MCF 10A (cell line): ENCODE measurements at regions of chr1 and their contacts with region 1.

Region 1: DNA sequence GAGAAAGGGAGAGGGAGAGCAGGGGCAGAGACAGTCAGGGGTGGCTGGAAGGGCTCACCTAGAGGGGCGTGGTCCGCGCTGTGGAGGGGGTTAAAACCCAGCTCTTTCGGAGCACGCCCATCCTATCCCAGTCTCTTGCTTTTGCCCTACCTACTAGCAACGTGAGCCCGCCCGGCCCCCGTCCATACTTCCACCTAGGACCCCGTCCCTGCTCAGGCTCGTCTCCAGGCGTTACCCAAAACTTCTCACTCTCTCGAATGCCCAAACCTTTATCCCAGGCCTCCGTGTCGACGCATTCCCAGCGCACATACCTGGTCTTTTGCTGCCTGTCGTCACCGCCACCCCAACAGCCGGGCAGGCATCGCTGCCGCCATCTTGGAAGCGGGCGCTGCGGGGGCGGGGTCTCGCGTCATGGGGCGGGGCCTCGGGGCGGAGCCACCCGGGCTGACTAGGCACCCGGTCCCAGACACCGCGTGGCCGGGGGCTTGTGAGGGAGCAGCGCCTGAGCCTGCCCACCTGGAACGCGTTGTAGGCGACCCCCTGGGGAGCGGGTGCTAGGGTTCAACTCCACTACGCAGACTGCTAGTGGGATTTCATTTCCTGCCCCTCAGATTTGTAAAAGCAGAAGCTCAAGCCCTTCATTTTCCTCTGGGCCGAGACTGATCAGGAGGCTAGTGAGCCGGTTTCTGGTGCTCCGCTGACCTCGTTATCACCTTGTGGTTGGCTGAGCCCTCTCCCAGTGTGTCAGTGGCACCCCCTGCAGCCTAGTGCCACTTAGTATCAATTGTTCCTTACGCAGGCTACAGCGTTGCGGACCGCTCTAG is at the start of gene B4GALT3:
- DNase-seq: peak; percentile 87
- H3K4me3 Mint-ChIP-seq: peak within 1 kb of the TSS; percentile 86
- H3K27ac Mint-ChIP-seq: peak within 1 kb of the TSS; percentile 92
- H3K4me1 Mint-ChIP-seq: peaks cover 37% of the 10 kb centered on the region
- H3K27me3 Mint-ChIP-seq: no peaks in the 10 kb centered on the region
- CTCF ChIP-seq: no peak
- total RNA-seq, gene B4GALT3: 50.0 and 51.7 TPM in 2 replicates

Region 2: DNA sequence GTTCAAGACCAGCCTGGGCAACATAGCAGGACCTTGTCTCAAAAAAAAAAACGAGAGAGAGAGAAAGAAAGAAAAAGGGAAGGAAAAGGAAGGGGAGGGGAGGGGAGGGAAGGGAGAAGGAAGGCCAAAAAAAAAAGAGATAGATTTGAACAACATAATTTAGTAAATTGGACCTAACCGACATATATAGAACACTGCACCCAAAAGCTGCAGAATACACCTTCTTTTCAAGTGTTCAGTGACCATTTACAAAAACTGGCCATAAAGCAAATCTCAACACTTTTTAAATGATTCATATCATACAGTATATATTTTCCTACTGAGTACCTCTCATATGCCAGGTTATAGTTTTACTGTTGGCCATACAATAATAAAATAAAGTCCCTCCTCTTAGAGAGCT is 145.4 kb before region 1 on chr1:
- CTCF ChIA-PET with region 1: no interaction called
- POLR2A ChIA-PET with region 1: no interaction called
- intact Hi-C with region 1: no loop called
- DNase-seq: no peak
- H3K4me3 Mint-ChIP-seq: no peak overlapping the region
- H3K27ac Mint-ChIP-seq: no peak overlapping the region
- H3K4me1 Mint-ChIP-seq: peaks cover 15% of the 10 kb centered on the region
- H3K27me3 Mint-ChIP-seq: no peaks in the 10 kb centered on the region
- CTCF ChIP-seq: no peak

Region 3: DNA sequence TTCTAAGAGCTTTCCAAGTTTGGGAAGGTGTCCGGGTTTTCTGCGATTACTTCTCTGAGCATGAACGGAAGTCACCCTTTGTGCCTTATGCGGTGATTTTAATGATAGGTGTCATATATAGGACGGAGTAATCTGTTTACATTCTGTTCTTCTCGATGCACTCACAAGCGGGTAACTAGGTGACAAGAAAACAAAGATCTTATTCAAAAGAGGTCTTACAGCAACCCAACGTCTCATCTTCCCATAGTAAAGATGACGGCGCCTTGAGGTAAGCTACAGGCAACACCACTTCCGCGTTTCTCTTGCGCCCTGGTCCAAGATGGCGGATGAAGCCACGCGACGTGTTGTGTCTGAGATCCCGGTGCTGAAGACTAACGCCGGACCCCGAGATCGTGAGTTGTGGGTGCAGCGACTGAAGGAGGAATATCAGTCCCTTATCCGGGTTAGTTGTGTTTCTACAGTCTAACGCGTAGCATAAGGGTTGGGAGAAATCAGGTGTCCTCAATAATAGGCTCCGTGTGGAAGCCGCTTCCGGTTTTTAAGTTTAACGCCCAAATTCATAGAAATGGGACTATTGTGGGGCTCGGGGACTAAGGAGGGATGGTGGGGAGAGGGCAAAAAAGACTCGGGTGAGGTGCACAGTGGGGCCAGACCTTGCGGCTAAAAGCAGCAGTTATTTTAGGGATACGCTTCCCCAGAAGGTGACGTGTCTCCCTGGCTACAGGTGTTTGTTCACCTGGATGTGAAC is 23.5 kb before region 1 on chr1 and contains the start of gene UFC1:
- CTCF ChIA-PET with region 1: interaction called, 5 read pairs
- POLR2A ChIA-PET with region 1: interaction called, 20 read pairs
- intact Hi-C with region 1: no loop called
- DNase-seq: peak; percentile 94
- H3K4me3 Mint-ChIP-seq: peak within 1 kb of the TSS; percentile 92
- H3K27ac Mint-ChIP-seq: peak within 1 kb of the TSS; percentile 100
- H3K4me1 Mint-ChIP-seq: peaks cover 18% of the 10 kb centered on the region
- H3K27me3 Mint-ChIP-seq: no peaks in the 10 kb centered on the region
- CTCF ChIP-seq: no peak
- total RNA-seq, gene UFC1: 123 and 125 TPM in 2 replicates

Region 4: DNA sequence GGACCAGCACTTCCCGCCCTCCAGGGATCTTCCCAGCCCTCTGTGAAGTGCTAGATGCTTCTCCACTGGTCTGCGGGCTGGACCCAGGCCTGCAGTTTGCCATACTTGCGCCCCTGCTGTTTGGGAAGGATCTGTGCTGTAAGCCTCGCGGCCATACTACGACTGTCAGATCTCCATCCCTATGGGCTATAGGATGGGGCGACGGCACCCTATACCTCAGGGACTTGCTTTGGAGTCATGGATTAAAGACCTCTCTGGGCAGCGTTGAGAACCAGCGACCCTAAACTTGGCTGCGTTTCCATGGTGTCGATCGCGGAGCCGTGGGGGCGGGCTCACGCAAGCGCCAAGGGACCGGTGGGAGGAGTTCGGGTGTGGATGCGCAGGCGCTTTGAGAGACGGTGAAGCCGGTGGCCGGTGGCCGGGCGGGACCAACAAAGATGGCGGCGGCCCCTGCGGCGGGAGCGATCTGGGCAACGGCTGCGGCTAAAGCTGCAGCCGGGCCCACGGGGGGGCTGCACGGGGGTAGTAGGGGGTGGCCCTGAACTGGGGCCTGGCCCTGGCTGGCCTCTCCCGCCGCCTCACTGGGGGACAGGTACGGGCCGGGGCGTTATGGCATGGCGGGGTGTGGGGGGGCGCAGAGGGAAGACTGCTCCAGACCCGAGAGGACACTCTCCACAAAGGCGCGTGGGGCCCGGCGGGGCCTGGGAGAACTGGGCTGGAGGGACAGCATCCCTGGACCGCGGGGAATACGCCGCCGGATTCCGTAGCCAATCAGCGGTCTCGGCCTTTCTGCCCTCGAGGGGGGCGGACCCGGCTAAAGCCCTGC is 18.0 kb before region 1 on chr1 and contains the start of gene USP21:
- CTCF ChIA-PET with region 1: interaction called, 56 read pairs
- POLR2A ChIA-PET with region 1: interaction called, 101 read pairs
- intact Hi-C with region 1: no loop called
- DNase-seq: peak; percentile 94
- H3K4me3 Mint-ChIP-seq: peak within 1 kb of the TSS; percentile 87
- H3K27ac Mint-ChIP-seq: peak within 1 kb of the TSS; percentile 94
- H3K4me1 Mint-ChIP-seq: peaks cover 45% of the 10 kb centered on the region
- H3K27me3 Mint-ChIP-seq: no peaks in the 10 kb centered on the region
- CTCF ChIP-seq: peak; percentile 55
- total RNA-seq, gene USP21: 33.8 and 36.6 TPM in 2 replicates

Region 5: DNA sequence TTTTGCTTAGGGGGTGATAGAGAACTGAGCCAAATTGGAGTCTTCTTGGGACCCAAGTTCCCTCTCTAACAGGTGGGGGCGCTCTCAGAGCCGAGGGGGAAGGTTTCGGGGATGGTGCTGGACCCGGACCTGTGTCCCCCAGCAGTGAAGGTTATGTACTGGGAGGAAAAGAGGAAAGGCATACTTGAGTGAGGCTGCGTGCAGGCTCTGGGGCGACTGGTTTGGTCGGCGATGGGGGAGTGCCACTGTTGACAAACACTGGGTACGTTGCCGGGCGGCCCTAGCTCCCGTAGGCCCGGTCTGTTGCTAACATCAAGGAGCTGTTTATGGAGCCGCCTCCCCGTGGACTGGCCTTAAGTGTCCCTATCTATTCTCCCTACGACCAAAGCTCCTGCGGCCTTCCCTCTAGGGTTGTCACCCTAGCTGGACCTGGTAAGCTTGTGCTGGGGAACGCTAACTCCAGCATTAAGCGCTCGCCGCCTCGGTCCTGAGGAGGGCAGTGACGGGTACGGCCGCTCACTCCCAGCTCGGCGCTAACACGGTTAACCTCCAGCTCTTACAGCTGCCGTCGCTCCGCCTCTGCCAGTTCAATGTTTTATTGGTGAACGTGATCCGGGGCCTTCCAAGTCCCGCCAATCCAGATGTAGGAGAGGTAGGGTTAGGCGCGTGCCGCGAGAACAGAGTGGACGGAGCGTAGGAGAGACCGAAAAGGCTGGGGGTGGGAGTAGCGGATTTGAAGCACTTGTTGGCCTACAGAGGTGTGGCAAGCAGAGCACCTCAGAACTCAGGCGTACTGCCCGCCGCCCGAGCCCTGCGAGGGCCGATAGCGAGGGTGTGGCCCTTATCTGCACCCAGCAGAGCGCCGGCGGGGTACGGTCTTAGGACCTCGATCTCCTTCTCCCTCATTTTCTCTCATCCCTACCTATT is 11.3 kb before region 1 on chr1 and contains the start of gene PPOX:
- CTCF ChIA-PET with region 1: interaction called, 56 read pairs
- POLR2A ChIA-PET with region 1: interaction called, 101 read pairs
- intact Hi-C with region 1: loop called (anchors 1 kb)
- DNase-seq: peak; percentile 100
- H3K4me3 Mint-ChIP-seq: peak within 1 kb of the TSS; percentile 98
- H3K27ac Mint-ChIP-seq: peak within 1 kb of the TSS; percentile 100
- H3K4me1 Mint-ChIP-seq: peaks cover 47% of the 10 kb centered on the region
- H3K27me3 Mint-ChIP-seq: no peaks in the 10 kb centered on the region
- CTCF ChIP-seq: peak; percentile 36
- total RNA-seq, gene PPOX: 30.3 and 32.4 TPM in 2 replicates

Region 6: DNA sequence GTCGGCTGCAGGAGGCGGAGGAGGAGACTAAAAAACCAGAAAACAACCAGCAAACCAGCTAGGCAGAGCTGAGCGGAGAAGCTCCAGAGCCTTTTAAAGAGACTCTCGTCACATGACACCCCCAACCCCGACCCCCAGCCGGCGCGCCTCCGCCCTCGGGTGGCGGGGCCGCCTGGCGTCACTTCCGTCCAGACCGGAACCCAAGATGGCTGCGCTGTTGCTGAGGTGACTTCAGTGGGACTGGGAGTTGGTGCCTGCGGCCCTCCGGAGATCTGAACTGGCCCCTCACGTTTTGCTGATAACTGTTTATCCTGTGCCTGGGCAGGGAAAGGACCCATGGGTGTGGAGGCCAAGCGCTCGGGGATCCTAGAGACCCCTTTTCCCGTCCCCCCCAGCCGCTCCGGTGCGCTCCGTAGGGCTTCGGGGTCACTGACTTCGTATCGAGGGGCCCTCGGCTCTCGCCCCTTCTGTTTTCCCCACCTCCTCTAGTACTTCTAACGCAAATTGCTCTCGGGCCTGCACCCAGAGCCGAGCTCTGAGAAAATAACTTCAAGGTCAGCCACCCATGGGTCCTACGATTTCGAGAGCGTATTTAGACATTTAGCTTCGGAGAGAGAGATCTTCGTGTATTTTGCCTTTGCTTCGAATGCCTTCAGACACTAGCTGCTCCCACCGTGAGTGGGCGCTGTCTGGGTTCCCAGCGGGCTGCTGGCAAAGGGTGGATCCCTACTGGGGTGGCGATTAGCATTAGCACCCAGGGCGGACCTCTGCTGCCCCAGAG is 137.1 kb after region 1 on chr1 and contains the start of gene SDHC:
- CTCF ChIA-PET with region 1: no interaction called
- POLR2A ChIA-PET with region 1: interaction called, 14 read pairs
- intact Hi-C with region 1: no loop called
- DNase-seq: peak; percentile 87
- H3K4me3 Mint-ChIP-seq: peak within 1 kb of the TSS; percentile 97
- H3K27ac Mint-ChIP-seq: peak within 1 kb of the TSS; percentile 100
- H3K4me1 Mint-ChIP-seq: peaks cover 13% of the 10 kb centered on the region
- H3K27me3 Mint-ChIP-seq: no peaks in the 10 kb centered on the region
- CTCF ChIP-seq: peak; percentile 35
- total RNA-seq, gene SDHC: 204 and 224 TPM in 2 replicates

Region 7: DNA sequence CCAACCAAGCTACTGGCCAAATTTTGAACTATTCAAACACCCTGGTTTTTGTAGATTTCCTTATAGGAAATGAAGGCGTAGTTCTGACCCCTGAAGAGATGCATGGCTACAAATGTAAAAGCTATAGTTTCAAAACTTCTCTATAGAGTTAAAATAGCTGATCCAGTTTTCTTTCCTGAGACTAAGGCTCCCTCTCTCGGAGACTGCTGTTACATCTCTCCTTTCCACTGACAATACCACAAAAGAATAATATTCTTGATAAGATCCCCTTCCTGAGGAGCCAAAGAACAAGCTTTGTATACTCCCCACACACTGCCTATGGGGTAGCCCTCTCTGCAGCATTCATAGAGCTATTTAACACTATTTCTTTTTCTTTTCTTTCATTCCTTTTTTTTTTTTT is 197.0 kb after region 1 on chr1:
- CTCF ChIA-PET with region 1: interaction called, 11 read pairs
- POLR2A ChIA-PET with region 1: interaction called, 3 read pairs
- intact Hi-C with region 1: no loop called
- DNase-seq: peak; percentile 33
- H3K4me3 Mint-ChIP-seq: no peak overlapping the region
- H3K27ac Mint-ChIP-seq: no peak overlapping the region
- H3K4me1 Mint-ChIP-seq: no peaks in the 10 kb centered on the region
- H3K27me3 Mint-ChIP-seq: no peaks in the 10 kb centered on the region
- CTCF ChIP-seq: peak; percentile 38